ENCODE measurements at regions of chr6 and their contacts with region 1.

Region 1: GRCh38 chr6:143510991-143511891 is at the start of gene FUCA2:
- DNase-seq: peak; percentile 80
- ATAC-seq: peak; percentile 85
- H3K4me3 Mint-ChIP-seq: peak within 1 kb of the TSS; percentile 84
- H3K27ac Mint-ChIP-seq: peak within 1 kb of the TSS; percentile 91
- H3K4me1 Mint-ChIP-seq: peaks cover 22% of the 10 kb centered on the region
- H3K27me3 Mint-ChIP-seq: no peaks in the 10 kb centered on the region
- total RNA-seq, gene FUCA2: 6.7 to 7.8 TPM

Region 2: GRCh38 chr6:143536865-143537691 is 25.8 kb after region 1 on chr6:
- CTCF ChIA-PET with region 1: interaction called, 3 read pairs
- POLR2A ChIA-PET with region 1: no interaction called
- intact Hi-C with region 1: loop called in 1 of 2 experiments (anchors 2 kb)
- DNase-seq: peak; percentile 81
- ATAC-seq: peak; percentile 73
- H3K4me3 Mint-ChIP-seq: peak overlapping the region; percentile 80
- H3K27ac Mint-ChIP-seq: peak overlapping the region; percentile 84
- H3K4me1 Mint-ChIP-seq: peaks cover 39% of the 10 kb centered on the region
- H3K27me3 Mint-ChIP-seq: no peaks in the 10 kb centered on the region

Region 3: GRCh38 chr6:143569040-143569439 is 57.8 kb after region 1 on chr6:
- CTCF ChIA-PET with region 1: interaction called, 3 read pairs
- POLR2A ChIA-PET with region 1: no interaction called
- intact Hi-C with region 1: loop called in 1 of 2 experiments (anchors 2 kb)
- DNase-seq: no peak
- ATAC-seq: no peak
- H3K4me3 Mint-ChIP-seq: no peak overlapping the region
- H3K27ac Mint-ChIP-seq: no peak overlapping the region
- H3K4me1 Mint-ChIP-seq: peaks cover 27% of the 10 kb centered on the region
- H3K27me3 Mint-ChIP-seq: no peaks in the 10 kb centered on the region

Region 4: GRCh38 chr6:143575440-143575839 is 64.2 kb after region 1 on chr6:
- CTCF ChIA-PET with region 1: interaction called, 16 read pairs
- POLR2A ChIA-PET with region 1: no interaction called
- intact Hi-C with region 1: loop called in 1 of 2 experiments (anchors 2 kb)
- DNase-seq: peak; percentile 58
- ATAC-seq: peak; percentile 93
- H3K4me3 Mint-ChIP-seq: no peak overlapping the region
- H3K27ac Mint-ChIP-seq: no peak overlapping the region
- H3K4me1 Mint-ChIP-seq: no peaks in the 10 kb centered on the region
- H3K27me3 Mint-ChIP-seq: no peaks in the 10 kb centered on the region

Region 5: GRCh38 chr6:143614235-143614634 is 103.0 kb after region 1 on chr6:
- CTCF ChIA-PET with region 1: no interaction called
- POLR2A ChIA-PET with region 1: no interaction called
- intact Hi-C with region 1: loop called in 1 of 2 experiments (anchors 5 kb)
- DNase-seq: no peak
- ATAC-seq: no peak
- H3K4me3 Mint-ChIP-seq: no peak overlapping the region
- H3K27ac Mint-ChIP-seq: no peak overlapping the region
- H3K4me1 Mint-ChIP-seq: peaks cover 34% of the 10 kb centered on the region
- H3K27me3 Mint-ChIP-seq: no peaks in the 10 kb centered on the region

Region 6: DNA sequence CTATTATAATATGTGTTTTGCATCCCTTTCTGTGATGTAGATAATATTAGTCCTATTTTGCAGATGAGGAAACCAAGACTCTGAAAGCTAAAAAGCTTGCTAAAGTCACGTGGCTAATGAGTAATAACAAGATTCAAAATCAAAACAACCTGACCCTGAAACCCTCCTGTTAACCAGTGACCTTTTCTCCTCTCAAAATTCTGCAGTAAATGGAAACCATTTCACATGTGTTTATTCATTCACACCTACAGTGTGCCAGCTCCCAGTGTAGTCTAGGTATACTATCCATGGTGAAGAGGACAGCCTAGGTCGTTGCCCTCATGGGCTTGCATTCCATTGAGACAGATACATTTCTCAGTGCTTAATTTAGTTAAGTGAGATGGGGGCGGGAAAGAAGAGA is 135.9 kb after region 1 on chr6:
- CTCF ChIA-PET with region 1: no interaction called
- POLR2A ChIA-PET with region 1: no interaction called
- intact Hi-C with region 1: no loop called
- DNase-seq: no peak
- ATAC-seq: peak; percentile 66
- H3K4me3 Mint-ChIP-seq: no peak overlapping the region
- H3K27ac Mint-ChIP-seq: peak overlapping the region; percentile 61
- H3K4me1 Mint-ChIP-seq: peaks cover 16% of the 10 kb centered on the region
- H3K27me3 Mint-ChIP-seq: no peaks in the 10 kb centered on the region